ENCODE measurements at regions of chr1 and their contacts with region 1.

Region 1: DNA sequence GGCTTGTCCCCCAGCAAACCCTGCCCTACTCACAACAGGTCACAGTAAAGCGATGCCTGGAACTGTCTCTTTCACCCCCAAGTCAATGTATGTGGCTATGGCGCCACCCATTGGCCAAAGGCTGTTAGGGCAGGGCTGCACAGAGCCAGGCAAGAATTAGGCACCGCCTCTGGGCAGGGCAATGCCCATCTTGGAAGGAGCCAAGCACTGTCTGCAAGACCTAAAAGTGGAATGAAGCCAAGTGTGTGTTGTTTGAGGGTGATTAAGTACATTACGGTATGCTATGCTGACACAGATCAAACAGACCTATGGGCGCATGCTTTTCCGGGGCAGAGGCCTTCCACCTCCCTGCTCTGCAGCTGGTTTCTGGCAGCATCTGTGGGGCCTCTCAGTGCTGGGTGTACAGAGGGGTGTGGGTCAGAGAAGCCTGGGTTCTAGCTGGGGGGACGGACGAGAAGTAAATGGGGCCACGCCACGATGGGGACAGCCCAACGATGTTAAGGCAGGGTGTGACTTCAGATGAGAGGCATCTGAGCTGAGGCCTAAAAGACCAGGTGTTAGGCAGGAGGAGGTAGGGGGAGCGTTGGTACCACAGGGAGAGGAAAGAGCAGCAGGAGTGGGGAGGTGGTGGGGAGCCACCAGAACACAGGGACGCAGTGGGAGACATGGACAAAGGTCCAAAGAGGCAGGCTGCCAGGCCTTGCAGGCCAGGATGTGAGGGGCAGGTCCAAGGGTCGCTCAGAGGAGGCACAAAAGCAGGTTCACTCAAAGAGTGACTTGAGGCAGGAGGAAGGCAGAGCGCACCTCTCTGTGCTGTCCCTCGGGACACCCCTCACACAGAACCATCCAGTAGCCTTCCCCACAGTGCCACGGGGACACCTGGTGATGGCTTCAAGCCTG is 49.8 kb downstream of the ACOT7 start:
- DNase-seq: peak; percentile 87
- H3K4me3 ChIP-seq: no peak overlapping the region
- H3K27ac ChIP-seq: peak overlapping the region; percentile 10 to 65 (median 26)
- H3K4me1 ChIP-seq: peaks cover 0 to 24% (median 17%) of the 10 kb centered on the region in 4 donors
- H3K27me3 ChIP-seq: no peaks in the 10 kb centered on the region
- CTCF ChIP-seq: peak; percentile 89 to 98 (median 95)
- EP300 ChIP-seq: no peak
- POLR2A ChIP-seq: no peak

Region 2: DNA sequence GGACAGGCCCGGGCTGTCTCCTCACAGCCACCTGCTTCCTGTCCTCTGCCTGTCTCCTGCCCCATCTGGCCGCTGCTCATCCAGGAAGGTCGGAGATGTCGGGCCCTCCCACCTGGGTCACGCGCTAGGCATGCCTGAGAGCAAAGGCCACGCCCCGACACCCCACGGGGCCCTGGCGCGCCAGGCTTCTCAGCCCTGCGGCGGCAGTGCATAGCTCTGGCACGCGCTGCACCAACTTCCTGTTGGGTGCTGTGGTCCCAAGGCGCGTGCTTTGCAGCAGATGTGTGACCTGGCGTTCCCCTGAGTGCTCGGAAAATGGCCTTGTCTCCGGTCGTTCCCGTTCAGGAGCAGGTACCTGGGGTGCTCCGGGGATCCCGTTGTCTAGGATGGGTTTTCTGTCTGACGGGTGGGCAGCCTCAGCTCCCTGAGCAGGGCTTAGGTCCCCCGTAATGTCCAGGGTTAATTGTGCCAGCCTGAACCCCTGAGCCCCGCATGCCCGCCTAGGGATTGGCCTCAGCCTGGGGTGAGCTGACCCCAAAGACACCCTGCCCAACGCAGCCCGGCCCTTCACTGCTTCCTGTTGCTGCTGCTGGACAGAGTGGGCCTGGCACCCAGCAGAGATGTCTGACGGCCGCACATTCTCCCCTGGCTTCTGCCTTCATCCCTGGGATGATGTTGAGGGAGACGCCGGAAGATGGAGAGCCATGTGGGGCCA is 317.5 kb before region 1 on chr1:
- in situ Hi-C with region 1: loop called in 2 of 4 experiments (anchors 25 kb)
- intact Hi-C with region 1: no loop called
- DNase-seq: peak; percentile 93
- H3K4me3 ChIP-seq: peak overlapping the region in 3 of 4 donors; percentile 10 to 41 (median 19)
- H3K27ac ChIP-seq: peak overlapping the region; percentile 42 to 73 (median 58)
- H3K4me1 ChIP-seq: peaks cover 3 to 10% (median 9%) of the 10 kb centered on the region in 4 donors
- H3K27me3 ChIP-seq: peaks cover 10% of the 10 kb centered on the region
- CTCF ChIP-seq: no peak
- EP300 ChIP-seq: no peak
- POLR2A ChIP-seq: peak; percentile 57

Region 3: DNA sequence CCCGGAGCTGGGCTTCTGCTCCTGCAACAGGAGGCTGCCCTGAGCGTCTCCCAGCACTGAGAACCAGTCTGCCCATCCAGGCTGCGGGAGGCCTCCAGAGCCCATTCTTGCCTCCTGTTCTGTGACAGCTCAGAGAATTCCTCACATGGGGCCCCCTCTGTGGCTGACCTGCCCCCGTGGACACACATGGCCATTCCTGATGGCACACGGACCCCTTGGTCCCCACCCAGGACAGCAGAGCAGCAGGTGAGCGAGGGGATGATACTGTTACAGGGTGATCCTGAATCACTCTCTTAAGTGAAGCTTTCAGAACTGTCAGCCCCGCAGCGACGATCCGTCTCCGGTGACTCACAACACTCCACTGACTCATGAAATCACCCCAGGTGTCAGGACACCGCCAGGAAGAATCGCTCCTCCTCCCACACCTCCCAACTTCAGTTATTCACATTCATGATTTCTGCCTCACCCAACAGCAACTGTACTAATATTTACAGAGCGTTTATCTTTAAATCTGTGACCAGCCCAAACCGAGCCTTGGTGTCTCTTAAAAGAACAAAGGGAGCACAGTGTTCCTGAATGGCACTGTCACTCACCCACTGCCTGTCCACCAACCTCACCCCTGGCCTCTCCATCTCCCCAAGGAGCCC is 186.1 kb before region 1 on chr1:
- in situ Hi-C with region 1: no loop called
- intact Hi-C with region 1: no loop called
- DNase-seq: peak; percentile 19
- H3K4me3 ChIP-seq: no peak overlapping the region
- H3K27ac ChIP-seq: no peak overlapping the region
- H3K4me1 ChIP-seq: peaks cover 0 to 5% (median 2%) of the 10 kb centered on the region in 4 donors
- H3K27me3 ChIP-seq: peaks cover 20% of the 10 kb centered on the region
- CTCF ChIP-seq: no peak
- EP300 ChIP-seq: no peak
- POLR2A ChIP-seq: no peak

Region 4: GRCh38 chr1:6245086-6245868 is 98.5 kb before region 1 on chr1:
- in situ Hi-C with region 1: loop called (anchors 5 to 10 kb)
- intact Hi-C with region 1: loop called (anchors 5 kb)
- DNase-seq: peak; percentile 78
- H3K4me3 ChIP-seq: peak overlapping the region in 1 of 4 donors; percentile 28
- H3K27ac ChIP-seq: no peak overlapping the region
- H3K4me1 ChIP-seq: peaks cover 19 to 44% (median 41%) of the 10 kb centered on the region in 4 donors
- H3K27me3 ChIP-seq: peaks cover 96% of the 10 kb centered on the region
- CTCF ChIP-seq: peak; percentile 61 to 92 (median 84)
- EP300 ChIP-seq: no peak
- POLR2A ChIP-seq: no peak

Region 5: GRCh38 chr1:6259491-6260425 is 84.0 kb before region 1 on chr1:
- in situ Hi-C with region 1: loop called in 2 of 4 experiments (anchors 5 to 10 kb)
- intact Hi-C with region 1: no loop called
- DNase-seq: peak; percentile 86
- H3K4me3 ChIP-seq: peak overlapping the region; percentile 36 to 75 (median 62)
- H3K27ac ChIP-seq: peak overlapping the region; percentile 58 to 82 (median 79)
- H3K4me1 ChIP-seq: peaks cover 5 to 25% (median 22%) of the 10 kb centered on the region in 4 donors
- H3K27me3 ChIP-seq: peaks cover 20% of the 10 kb centered on the region
- CTCF ChIP-seq: no peak
- EP300 ChIP-seq: no peak
- POLR2A ChIP-seq: peak; percentile 19

Region 6: DNA sequence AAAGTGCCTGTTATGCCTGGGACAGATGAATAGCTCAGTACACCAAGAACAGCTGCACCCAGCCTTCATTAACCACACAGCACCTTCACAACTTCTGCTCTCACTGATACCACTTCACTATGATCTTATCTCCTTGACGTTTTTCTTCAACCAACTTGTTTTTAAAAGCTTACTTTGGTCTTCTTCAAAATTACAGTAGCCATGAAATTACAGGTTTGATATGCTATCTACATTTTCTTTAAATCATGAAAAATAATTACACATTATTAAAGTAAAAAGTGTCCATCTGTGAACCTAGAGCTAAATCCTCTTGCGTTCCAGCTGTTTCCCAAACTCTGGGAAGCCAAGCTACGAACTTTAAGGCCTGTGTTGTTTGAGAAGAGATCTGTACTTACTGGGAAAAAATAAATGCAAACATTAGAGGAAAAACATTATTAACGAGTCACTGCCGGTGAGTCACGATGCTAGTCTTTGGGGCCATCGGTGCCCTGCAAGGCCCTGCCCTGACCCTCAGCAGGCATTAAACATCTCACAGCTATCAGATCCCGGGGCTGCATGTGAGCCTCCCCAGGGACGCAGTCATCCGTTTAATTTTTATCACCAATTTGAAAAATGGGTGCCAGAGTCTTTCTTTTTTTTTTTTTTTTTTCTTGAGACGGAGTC is 26.5 kb before region 1 on chr1:
- in situ Hi-C with region 1: no loop called
- intact Hi-C with region 1: no loop called
- DNase-seq: no peak
- H3K4me3 ChIP-seq: no peak overlapping the region
- H3K27ac ChIP-seq: no peak overlapping the region
- H3K4me1 ChIP-seq: no peaks in the 10 kb centered on the region
- H3K27me3 ChIP-seq: no peaks in the 10 kb centered on the region
- CTCF ChIP-seq: no peak
- EP300 ChIP-seq: no peak
- POLR2A ChIP-seq: no peak

Region 7: DNA sequence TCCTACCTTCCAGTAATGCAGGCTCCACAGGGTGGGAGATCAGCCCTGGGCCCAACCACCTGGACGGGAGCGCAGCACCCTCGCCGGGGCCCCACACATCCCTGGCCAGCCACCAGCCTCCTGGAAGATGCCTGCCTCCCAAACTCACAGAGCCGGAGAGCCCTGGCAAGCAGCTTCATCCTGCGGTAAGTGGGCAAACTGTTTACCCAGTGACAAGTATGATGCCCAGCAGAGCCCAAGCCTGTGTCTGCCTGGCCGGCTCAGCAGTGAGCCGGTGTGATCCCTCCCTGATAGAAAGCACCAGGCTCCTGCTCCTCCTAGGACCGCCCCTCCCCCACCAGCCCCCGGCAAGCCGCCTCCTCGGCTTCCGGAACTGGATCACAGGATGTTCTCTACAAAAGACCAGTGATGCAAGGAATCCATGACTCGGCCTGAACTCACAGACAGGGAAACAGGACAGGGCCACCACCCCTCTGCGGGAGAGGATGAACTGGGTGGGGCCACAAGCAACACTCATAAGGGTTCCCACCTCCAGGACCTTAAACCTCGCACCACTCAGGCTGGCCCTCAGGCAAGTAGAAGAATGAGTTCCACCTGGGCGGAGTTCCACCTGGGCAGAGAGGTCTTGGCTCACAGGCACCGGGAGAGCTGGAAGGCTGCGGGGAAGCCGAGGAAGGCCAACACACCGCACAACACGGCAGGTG is 41.9 kb after region 1 on chr1:
- in situ Hi-C with region 1: no loop called
- intact Hi-C with region 1: no loop called
- DNase-seq: peak; percentile 25
- H3K4me3 ChIP-seq: no peak overlapping the region
- H3K27ac ChIP-seq: peak overlapping the region; percentile 64 to 74 (median 68)
- H3K4me1 ChIP-seq: peaks cover 0 to 8% (median 4%) of the 10 kb centered on the region in 4 donors
- H3K27me3 ChIP-seq: no peaks in the 10 kb centered on the region
- CTCF ChIP-seq: no peak
- EP300 ChIP-seq: no peak
- POLR2A ChIP-seq: no peak

Region 8: GRCh38 chr1:6401673-6402072 is 57.9 kb after region 1 on chr1:
- in situ Hi-C with region 1: loop called in 1 of 4 experiments (anchors 10 kb)
- intact Hi-C with region 1: no loop called
- DNase-seq: no peak
- H3K4me3 ChIP-seq: no peak overlapping the region
- H3K27ac ChIP-seq: no peak overlapping the region
- H3K4me1 ChIP-seq: peaks cover 0 to 5% (median 2%) of the 10 kb centered on the region in 4 donors
- H3K27me3 ChIP-seq: no peaks in the 10 kb centered on the region
- CTCF ChIP-seq: no peak
- EP300 ChIP-seq: no peak
- POLR2A ChIP-seq: no peak

Region 9: GRCh38 chr1:6414443-6414844 is 70.7 kb after region 1 on chr1:
- in situ Hi-C with region 1: loop called in 2 of 4 experiments (anchors 5 to 10 kb)
- intact Hi-C with region 1: no loop called
- DNase-seq: peak; percentile 56
- H3K4me3 ChIP-seq: no peak overlapping the region
- H3K27ac ChIP-seq: peak overlapping the region; percentile 45 to 73 (median 55)
- H3K4me1 ChIP-seq: peaks cover 10 to 49% (median 36%) of the 10 kb centered on the region in 4 donors
- H3K27me3 ChIP-seq: peaks cover 57% of the 10 kb centered on the region
- CTCF ChIP-seq: peak in 4 of 5 experiments; percentile 13 to 30 (median 30)
- EP300 ChIP-seq: no peak
- POLR2A ChIP-seq: no peak

Region 10: DNA sequence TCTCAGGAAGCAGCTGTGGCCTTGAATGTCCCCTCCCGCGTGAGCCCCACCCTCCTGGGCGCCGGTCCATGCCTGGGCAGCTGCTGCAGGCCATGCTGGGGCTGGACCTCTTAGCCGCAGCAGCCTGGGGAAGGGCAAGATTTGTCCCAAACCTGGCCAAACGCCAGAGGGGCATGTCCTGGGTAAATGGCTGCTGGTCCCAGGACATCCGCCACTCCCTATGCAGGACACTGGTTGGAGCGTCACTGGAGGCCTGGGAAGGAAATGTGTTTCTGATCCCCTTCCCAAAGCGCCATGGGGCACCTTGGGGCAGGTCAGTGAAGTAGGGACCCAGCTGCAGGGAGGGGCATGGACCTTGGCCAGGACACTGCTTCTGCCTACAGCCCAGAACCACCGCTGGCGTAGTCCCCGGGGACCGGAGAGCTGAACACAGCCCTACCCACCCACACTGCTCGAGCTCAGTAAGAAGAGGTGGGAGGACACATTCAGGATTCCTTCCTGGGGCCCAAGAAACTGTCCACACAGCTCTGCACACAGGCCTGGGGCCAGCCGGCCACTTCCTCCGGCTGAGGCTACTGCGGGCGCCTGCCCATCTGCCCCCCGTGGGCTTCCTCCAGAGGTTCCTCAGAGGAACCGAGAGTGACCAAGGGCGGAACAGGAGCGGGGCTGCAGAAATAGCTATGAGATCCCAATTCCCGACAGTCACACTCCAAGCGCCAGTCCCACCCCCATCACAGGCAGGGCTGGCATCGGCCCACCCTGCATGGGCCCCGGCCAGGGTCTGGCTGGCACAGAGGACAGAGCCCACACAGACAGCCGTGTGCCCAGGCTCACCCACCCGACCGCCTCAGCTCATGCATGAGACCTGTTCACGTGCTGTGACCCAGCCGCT is 158.5 kb after region 1 on chr1:
- in situ Hi-C with region 1: no loop called
- intact Hi-C with region 1: no loop called
- DNase-seq: no peak
- H3K4me3 ChIP-seq: no peak overlapping the region
- H3K27ac ChIP-seq: peak overlapping the region in 1 of 4 donors; percentile 41
- H3K4me1 ChIP-seq: peaks cover 8 to 18% (median 14%) of the 10 kb centered on the region in 4 donors
- H3K27me3 ChIP-seq: peaks cover 17% of the 10 kb centered on the region
- CTCF ChIP-seq: no peak
- EP300 ChIP-seq: no peak
- POLR2A ChIP-seq: no peak